ENCODE measurements at regions of chr13 and their contacts with region 1.

Region 1: GRCh38 chr13:31909864-31910551 is 121.6 kb upstream of the FRY start:
- DNase-seq: peak; percentile 74
- H3K4me3 Mint-ChIP-seq: no peak overlapping the region
- H3K27ac Mint-ChIP-seq: no peak overlapping the region
- H3K4me1 Mint-ChIP-seq: peaks cover 12% of the 10 kb centered on the region
- H3K27me3 Mint-ChIP-seq: no peaks in the 10 kb centered on the region
- CTCF ChIP-seq: peak; percentile 80

Region 2: GRCh38 chr13:31896427-31896826 is 13.6 kb before region 1 on chr13:
- CTCF ChIA-PET with region 1: interaction called, 27 read pairs
- POLR2A ChIA-PET with region 1: interaction called, 3 read pairs
- intact Hi-C with region 1: no loop called
- DNase-seq: peak; percentile 55
- H3K4me3 Mint-ChIP-seq: no peak overlapping the region
- H3K27ac Mint-ChIP-seq: no peak overlapping the region
- H3K4me1 Mint-ChIP-seq: peaks cover 5% of the 10 kb centered on the region
- H3K27me3 Mint-ChIP-seq: no peaks in the 10 kb centered on the region
- CTCF ChIP-seq: no peak

Region 3: DNA sequence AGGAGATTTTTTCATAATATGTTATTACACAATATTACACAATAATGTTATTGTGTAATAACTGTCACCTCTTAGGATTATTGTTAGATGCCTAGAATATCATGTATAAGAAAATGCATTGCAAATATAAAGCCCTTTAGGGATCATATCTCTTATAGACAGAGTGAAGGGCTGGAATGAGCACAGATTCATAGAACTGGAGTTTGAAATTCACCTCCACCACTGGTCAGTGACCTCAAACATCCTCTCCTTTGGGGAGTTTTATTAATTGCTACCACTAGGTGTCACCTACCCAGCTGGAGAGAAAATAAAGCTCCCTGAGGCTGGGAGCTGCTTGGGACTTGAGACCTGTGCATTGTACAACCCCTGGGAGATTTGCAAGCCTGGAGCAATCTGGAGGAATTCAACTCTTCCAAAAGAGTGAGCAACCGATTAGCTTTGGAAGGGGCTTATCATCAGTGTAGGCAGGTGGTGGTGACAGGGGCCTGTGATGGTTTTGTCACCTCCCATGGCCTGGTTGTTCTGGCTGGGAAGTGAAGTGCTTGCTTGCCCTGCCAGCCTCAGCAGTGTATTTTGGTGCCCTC is 91.3 kb after region 1 on chr13:
- CTCF ChIA-PET with region 1: interaction called, 16 read pairs
- POLR2A ChIA-PET with region 1: no interaction called
- intact Hi-C with region 1: no loop called
- DNase-seq: peak; percentile 71
- H3K4me3 Mint-ChIP-seq: no peak overlapping the region
- H3K27ac Mint-ChIP-seq: peak overlapping the region; percentile 27
- H3K4me1 Mint-ChIP-seq: no peaks in the 10 kb centered on the region
- H3K27me3 Mint-ChIP-seq: no peaks in the 10 kb centered on the region
- CTCF ChIP-seq: peak; percentile 51

Region 4: GRCh38 chr13:32164622-32165268 is 254.7 kb after region 1 on chr13:
- CTCF ChIA-PET with region 1: interaction called, 14 read pairs
- POLR2A ChIA-PET with region 1: interaction called, 3 read pairs
- intact Hi-C with region 1: no loop called
- DNase-seq: peak; percentile 81
- H3K4me3 Mint-ChIP-seq: no peak overlapping the region
- H3K27ac Mint-ChIP-seq: peak overlapping the region; percentile 61
- H3K4me1 Mint-ChIP-seq: peaks cover 12% of the 10 kb centered on the region
- H3K27me3 Mint-ChIP-seq: no peaks in the 10 kb centered on the region
- CTCF ChIP-seq: peak; percentile 38

Region 5: DNA sequence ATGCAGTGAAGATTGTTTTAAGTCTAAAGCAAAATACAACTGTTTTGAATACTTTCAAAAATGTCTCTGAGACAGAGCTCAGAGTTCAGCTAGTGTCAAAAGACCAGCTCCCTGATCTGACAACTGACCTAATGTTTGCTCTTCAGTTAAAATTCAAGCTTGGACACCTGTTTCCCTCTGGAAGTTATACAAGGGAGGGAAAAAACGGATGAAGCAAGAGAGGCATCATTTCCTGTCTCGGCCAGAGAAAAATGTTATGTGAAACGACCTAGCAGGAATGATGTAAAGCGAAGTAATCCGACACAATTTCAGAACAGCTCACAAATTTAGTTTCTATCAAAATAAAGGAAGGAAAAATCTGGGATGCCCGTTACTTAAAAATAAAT is 345.7 kb after region 1 on chr13:
- CTCF ChIA-PET with region 1: interaction called, 11 read pairs
- POLR2A ChIA-PET with region 1: no interaction called
- intact Hi-C with region 1: no loop called
- DNase-seq: peak; percentile 76
- H3K4me3 Mint-ChIP-seq: no peak overlapping the region
- H3K27ac Mint-ChIP-seq: no peak overlapping the region
- H3K4me1 Mint-ChIP-seq: peaks cover 19% of the 10 kb centered on the region
- H3K27me3 Mint-ChIP-seq: no peaks in the 10 kb centered on the region
- CTCF ChIP-seq: no peak

Region 6: GRCh38 chr13:32315238-32316027 is 405.4 kb after region 1 on chr13 and contains the starts of genes BRCA2 and ZAR1L:
- CTCF ChIA-PET with region 1: interaction called, 12 read pairs
- POLR2A ChIA-PET with region 1: interaction called, 7 read pairs
- intact Hi-C with region 1: loop called (anchors 2 kb)
- DNase-seq: peak; percentile 86
- H3K4me3 Mint-ChIP-seq: peak within 1 kb of the TSS; percentile 90
- H3K27ac Mint-ChIP-seq: peak within 1 kb of the TSS; percentile 98
- H3K4me1 Mint-ChIP-seq: no peaks in the 10 kb centered on the region
- H3K27me3 Mint-ChIP-seq: no peaks in the 10 kb centered on the region
- CTCF ChIP-seq: no peak
- total RNA-seq, gene BRCA2: 7.9 and 11.9 TPM in 2 replicates
- total RNA-seq, gene ZAR1L: not detected in 2 replicates

Region 7: DNA sequence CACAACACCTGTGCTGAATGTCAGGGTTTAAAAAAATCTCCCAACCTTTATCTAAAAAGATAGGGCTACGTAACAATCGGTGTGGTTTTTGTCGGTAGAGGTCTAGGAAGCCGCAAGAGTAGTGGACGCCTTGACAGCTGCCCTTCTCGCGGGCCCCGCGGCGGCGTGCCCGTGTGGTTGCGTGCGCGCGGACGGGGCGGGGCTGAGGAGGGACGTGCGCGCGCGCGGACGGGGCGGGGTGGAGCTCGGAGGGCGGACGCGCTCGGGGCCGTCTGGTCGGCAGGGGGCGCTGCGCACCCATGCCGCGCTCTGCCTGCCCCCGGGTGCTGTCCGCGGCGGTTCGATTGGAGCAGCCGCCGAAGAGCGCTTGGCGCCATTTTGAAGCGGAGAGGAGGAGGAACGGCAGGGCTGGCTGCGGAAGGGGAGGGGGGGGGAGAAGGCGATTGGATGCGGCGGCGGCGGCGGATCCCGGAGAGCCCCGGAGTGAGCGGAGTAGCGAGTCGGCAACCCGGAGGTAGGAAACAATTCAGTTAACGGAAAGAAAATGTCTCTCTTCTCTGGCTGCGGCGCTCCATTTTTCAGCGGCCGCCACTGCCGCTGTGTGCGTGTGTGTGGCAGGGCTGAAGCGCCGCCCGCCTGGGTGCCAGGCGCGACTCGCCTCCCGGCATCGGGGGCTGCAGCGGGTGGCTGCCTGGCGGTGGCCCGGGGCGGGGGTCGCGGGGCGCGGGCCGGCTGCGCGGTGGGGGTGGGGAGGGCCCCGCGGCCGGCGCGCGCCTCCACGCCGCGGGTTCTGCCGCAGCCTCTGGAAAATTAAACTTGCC is 676.3 kb after region 1 on chr13 and contains the start of gene PDS5B:
- CTCF ChIA-PET with region 1: interaction called, 31 read pairs
- POLR2A ChIA-PET with region 1: interaction called, 14 read pairs
- intact Hi-C with region 1: no loop called
- DNase-seq: peak; percentile 92
- H3K4me3 Mint-ChIP-seq: peak within 1 kb of the TSS; percentile 86
- H3K27ac Mint-ChIP-seq: peak within 1 kb of the TSS; percentile 85
- H3K4me1 Mint-ChIP-seq: peaks cover 30% of the 10 kb centered on the region
- H3K27me3 Mint-ChIP-seq: no peaks in the 10 kb centered on the region
- CTCF ChIP-seq: peak; percentile 72
- total RNA-seq, gene PDS5B: 25.4 and 29.6 TPM in 2 replicates

Measured in MCF 10A (cell line).